ENCODE measurements at regions of chr1 and their contacts with region 1.

Region 1: GRCh38 chr1:91021686-91022517 is at the start of gene ZNF644:
- DNase-seq: peak; percentile 96
- H3K4me3 Mint-ChIP-seq: peak within 1 kb of the TSS; percentile 98
- H3K27ac Mint-ChIP-seq: peak within 1 kb of the TSS; percentile 99
- H3K4me1 Mint-ChIP-seq: peaks cover 63% of the 10 kb centered on the region
- H3K27me3 Mint-ChIP-seq: no peaks in the 10 kb centered on the region
- total RNA-seq, gene ZNF644: 37.5 to 42.5 TPM

Region 2: DNA sequence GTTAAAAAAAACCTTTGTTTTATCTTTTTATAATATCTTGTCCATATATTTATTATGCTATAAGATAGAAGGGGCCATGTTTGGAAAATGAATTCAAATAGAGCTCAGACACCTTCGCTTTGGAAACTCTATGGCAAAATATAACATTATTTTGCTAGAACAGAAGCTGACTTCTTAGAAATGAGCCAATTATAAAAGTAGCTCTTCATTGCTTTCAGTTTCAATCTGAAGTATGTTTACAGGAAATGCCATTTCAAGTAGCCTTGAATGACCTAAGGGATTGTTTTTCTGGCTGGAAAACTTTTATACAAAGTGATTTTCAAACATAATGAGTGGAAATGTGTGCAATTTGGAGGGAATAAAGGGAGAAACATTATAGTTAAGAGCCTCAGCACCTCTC is 1711.4 kb before region 1 on chr1:
- CTCF ChIA-PET with region 1: no interaction called
- POLR2A ChIA-PET with region 1: no interaction called
- intact Hi-C with region 1: loop called (anchors 10 kb)
- DNase-seq: no peak
- H3K4me3 Mint-ChIP-seq: peak overlapping the region; percentile 14
- H3K27ac Mint-ChIP-seq: peak overlapping the region; percentile 85
- H3K4me1 Mint-ChIP-seq: peaks cover 45% of the 10 kb centered on the region
- H3K27me3 Mint-ChIP-seq: no peaks in the 10 kb centered on the region

Region 3: GRCh38 chr1:90850898-90851710 is 170.8 kb before region 1 on chr1:
- CTCF ChIA-PET with region 1: interaction called, 3 read pairs
- POLR2A ChIA-PET with region 1: no interaction called
- intact Hi-C with region 1: loop called (anchors 2 kb)
- DNase-seq: peak; percentile 86
- H3K4me3 Mint-ChIP-seq: peak overlapping the region; percentile 66
- H3K27ac Mint-ChIP-seq: no peak overlapping the region
- H3K4me1 Mint-ChIP-seq: peaks cover 6% of the 10 kb centered on the region
- H3K27me3 Mint-ChIP-seq: peaks cover 33% of the 10 kb centered on the region

Region 4: DNA sequence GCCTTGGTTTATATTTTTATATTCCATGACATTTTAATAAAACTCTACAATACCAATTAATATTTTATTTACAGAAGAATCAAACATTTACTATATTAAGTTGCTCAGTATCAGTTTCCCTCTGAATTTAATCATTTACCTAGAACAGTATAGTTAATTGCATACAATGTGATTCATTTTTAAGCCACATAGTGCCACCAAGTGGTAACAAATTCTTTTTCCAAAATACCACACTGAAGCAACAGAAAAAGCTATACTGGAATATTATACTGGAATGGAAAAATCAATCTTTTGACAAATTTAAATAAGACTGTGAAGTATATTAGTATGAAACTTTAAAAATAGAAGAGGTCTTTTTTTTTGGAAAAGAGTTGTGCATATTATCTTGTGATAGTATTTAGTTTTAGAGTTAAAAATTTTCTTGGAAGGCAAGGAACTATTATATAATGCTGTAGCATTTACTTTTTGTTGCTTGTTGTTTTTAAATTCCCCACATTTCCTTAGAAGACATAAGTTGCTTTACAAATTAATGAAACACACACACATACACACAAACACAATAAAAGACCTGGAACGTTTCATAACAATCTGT is 57.4 kb before region 1 on chr1:
- CTCF ChIA-PET with region 1: no interaction called
- POLR2A ChIA-PET with region 1: no interaction called
- intact Hi-C with region 1: loop called (anchors 2 kb)
- DNase-seq: no peak
- H3K4me3 Mint-ChIP-seq: no peak overlapping the region
- H3K27ac Mint-ChIP-seq: no peak overlapping the region
- H3K4me1 Mint-ChIP-seq: peaks cover 38% of the 10 kb centered on the region
- H3K27me3 Mint-ChIP-seq: no peaks in the 10 kb centered on the region

Region 5: DNA sequence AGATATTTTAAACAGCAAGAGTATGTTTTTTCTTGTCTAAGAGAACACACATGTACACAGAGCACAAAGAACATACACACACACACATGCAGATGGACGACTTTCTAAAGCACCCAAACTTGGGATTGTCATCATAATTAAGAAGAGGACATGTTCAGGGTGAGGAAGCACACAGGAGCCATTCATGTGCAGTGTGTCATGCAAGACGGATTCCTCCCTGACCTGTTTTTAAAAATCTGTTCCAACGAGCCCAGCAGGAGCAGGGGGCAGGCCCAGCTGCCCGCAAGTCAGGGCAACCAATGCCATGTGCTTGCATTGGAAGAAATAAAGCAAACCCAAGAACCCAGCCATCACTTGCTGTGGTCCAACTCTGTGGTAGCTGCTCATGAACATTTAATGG is 167.2 kb after region 1 on chr1:
- CTCF ChIA-PET with region 1: no interaction called
- POLR2A ChIA-PET with region 1: no interaction called
- intact Hi-C with region 1: no loop called
- DNase-seq: no peak
- H3K4me3 Mint-ChIP-seq: no peak overlapping the region
- H3K27ac Mint-ChIP-seq: no peak overlapping the region
- H3K4me1 Mint-ChIP-seq: no peaks in the 10 kb centered on the region
- H3K27me3 Mint-ChIP-seq: peaks cover 17% of the 10 kb centered on the region

Region 6: DNA sequence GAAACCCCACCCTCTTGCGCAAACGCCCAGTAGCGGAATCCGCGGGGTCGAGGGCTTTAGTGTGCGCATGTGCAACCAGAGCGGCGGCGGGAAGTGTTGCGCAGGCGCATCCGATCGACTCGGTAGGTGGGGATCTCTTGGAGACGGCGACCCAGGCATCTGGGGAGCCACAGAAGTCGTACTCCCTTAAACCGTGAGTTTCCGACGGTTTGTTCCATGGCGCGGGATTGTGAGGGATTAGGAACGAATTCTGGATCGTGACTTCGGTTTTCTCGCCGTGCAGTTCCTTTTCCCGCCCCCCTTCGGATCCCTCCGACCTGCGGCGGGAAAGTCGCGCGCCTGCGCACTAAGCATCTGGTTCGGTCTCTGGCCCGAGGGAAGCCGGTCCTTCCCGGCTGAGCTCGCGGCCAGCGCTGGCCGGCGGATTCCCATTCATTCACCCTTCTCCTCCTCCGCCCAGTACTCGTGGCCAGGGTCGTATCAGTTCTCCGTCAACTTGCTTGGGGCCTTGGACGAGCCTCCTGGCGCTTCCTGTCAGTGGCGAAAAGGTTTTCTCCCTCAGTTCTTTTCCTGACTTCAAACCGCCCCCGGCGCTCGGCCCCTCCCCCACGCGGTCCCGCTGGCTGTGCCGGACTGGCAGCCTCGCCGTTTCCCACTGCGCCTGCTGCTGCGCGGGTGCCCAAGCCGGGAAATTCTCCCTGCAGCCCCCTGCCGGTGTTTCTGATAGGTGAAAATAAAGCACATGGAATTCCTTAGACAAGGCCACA is 479.0 kb after region 1 on chr1 and contains the start of gene CDC7:
- CTCF ChIA-PET with region 1: no interaction called
- POLR2A ChIA-PET with region 1: no interaction called
- intact Hi-C with region 1: loop called (anchors 5 kb)
- DNase-seq: peak; percentile 88
- H3K4me3 Mint-ChIP-seq: no peak within 1 kb of the TSS
- H3K27ac Mint-ChIP-seq: no peak within 1 kb of the TSS
- H3K4me1 Mint-ChIP-seq: peaks cover 16% of the 10 kb centered on the region
- H3K27me3 Mint-ChIP-seq: no peaks in the 10 kb centered on the region
- total RNA-seq, gene CDC7: 20.2 to 20.4 TPM

Measured in activated CD4-positive, alpha-beta memory T cell treated with anti-CD3 and anti-CD28 coated beads for 36 hours (primary cell).